H1 (cell line): ENCODE measurements at regions of chr1 and their contacts with region 1.

Region 1: GRCh38 chr1:70410604-70411359 is at the start of gene CTH:
- DNase-seq: peak; percentile 95 to 96
- H3K4me3 ChIP-seq: peak within 1 kb of the TSS; percentile 79 to 96 (median 88)
- H3K27ac ChIP-seq: peak within 1 kb of the TSS; percentile 98
- H3K4me1 ChIP-seq: no peaks in the 10 kb centered on the region; a peak in 1 of 7 replicates
- H3K27me3 ChIP-seq: no peaks in the 10 kb centered on the region
- CTCF ChIP-seq: no peak
- EP300 ChIP-seq: peak; percentile 28 to 79; a peak in 2 of 3 replicates
- POLR2A ChIP-seq: peak; percentile 99 to 100
- RAD21 ChIP-seq: no peak
- total RNA-seq, gene CTH: 33.2 and 34.5 TPM in 2 replicates

Region 2: GRCh38 chr1:70221241-70222121 is 189.3 kb before region 1 on chr1 and contains the start of gene SRSF11:
- CTCF ChIA-PET with region 1: no interaction called
- POLR2A ChIA-PET with region 1: interaction called, 23 read pairs
- DNase-seq: peak; percentile 73 to 98
- H3K4me3 ChIP-seq: peak within 1 kb of the TSS; percentile 92 to 95 (median 94)
- H3K27ac ChIP-seq: peak within 1 kb of the TSS; percentile 94
- H3K4me1 ChIP-seq: no peaks in the 10 kb centered on the region
- H3K27me3 ChIP-seq: no peaks in the 10 kb centered on the region
- CTCF ChIP-seq: no peak
- EP300 ChIP-seq: no peak; a peak in 1 of 3 replicates
- POLR2A ChIP-seq: peak; percentile 75 to 99
- RAD21 ChIP-seq: no peak
- total RNA-seq, gene SRSF11: 169 and 183 TPM in 2 replicates

Region 3: GRCh38 chr1:70256664-70257063 is 154.1 kb before region 1 on chr1:
- CTCF ChIA-PET with region 1: no interaction called
- POLR2A ChIA-PET with region 1: interaction called, 11 read pairs
- DNase-seq: no peak
- H3K4me3 ChIP-seq: no peak overlapping the region
- H3K27ac ChIP-seq: no peak overlapping the region
- H3K4me1 ChIP-seq: no peaks in the 10 kb centered on the region
- H3K27me3 ChIP-seq: no peaks in the 10 kb centered on the region
- CTCF ChIP-seq: no peak
- EP300 ChIP-seq: no peak
- POLR2A ChIP-seq: no peak
- RAD21 ChIP-seq: no peak

Region 4: GRCh38 chr1:70314706-70315304 is 96.0 kb before region 1 on chr1:
- CTCF ChIA-PET with region 1: no interaction called
- POLR2A ChIA-PET with region 1: interaction called, 17 read pairs
- DNase-seq: no peak
- H3K4me3 ChIP-seq: no peak overlapping the region
- H3K27ac ChIP-seq: no peak overlapping the region
- H3K4me1 ChIP-seq: no peaks in the 10 kb centered on the region
- H3K27me3 ChIP-seq: no peaks in the 10 kb centered on the region
- CTCF ChIP-seq: peak in 1 of 3 experiments; percentile 7; a peak in 1 of 4 replicates
- EP300 ChIP-seq: no peak
- POLR2A ChIP-seq: no peak
- RAD21 ChIP-seq: no peak; a peak in 1 of 4 replicates

Region 5: DNA sequence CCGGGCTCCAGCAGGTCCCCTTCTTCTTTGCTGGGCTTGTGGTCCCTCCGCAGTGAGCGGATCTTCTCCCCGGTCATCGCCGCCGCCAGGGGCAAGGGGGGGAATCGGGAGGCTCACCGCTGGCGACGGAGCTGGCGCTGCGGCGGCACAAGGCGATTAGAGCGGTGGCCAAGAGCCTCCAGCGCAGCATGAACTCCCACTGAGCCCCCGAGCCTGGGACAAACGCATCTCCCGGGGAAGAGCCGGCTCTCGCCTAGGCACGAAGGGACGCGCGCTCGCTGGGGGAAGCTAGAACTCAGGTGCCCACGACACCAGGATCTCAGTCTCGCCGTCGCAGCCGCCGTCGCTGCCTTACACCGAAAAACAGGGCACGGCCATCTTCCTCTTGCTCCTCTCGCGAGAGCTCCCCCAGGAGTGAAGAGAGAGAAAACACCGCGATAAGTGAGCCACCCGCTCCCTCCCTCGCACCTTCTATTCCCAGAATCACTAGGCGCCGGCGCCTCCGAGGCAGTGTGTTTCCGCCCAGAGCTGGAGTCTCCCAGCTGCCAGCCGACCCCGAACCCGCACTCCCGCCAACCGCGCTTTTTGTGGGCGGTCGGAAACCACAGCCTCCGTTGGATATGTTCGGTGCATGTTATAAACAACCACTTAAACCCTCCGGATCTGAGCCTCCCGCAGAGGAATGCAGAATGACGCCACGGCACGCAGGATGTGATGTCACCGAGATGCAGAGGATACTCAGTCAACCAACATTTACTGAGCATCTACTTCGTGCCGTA is 56.3 kb before region 1 on chr1 and contains the start of gene ANKRD13C:
- CTCF ChIA-PET with region 1: interaction called, 8 read pairs
- POLR2A ChIA-PET with region 1: interaction called, 103 read pairs
- DNase-seq: peak; percentile 83 to 93
- H3K4me3 ChIP-seq: peak within 1 kb of the TSS; percentile 86 to 97 (median 90)
- H3K27ac ChIP-seq: peak within 1 kb of the TSS; percentile 98
- H3K4me1 ChIP-seq: no peaks in the 10 kb centered on the region
- H3K27me3 ChIP-seq: no peaks in the 10 kb centered on the region
- CTCF ChIP-seq: 0 out of 4 replicates have a peak, but pooled peaks of 1 of the 3 experiments have one; percentile 2
- EP300 ChIP-seq: no peak
- POLR2A ChIP-seq: peak; percentile 94 to 98
- RAD21 ChIP-seq: peak; percentile 8 to 17; a peak in 2 of 4 replicates
- total RNA-seq, gene ANKRD13C: 20.9 and 21.7 TPM in 2 replicates

Region 6: GRCh38 chr1:70382682-70383081 is 28.1 kb before region 1 on chr1:
- CTCF ChIA-PET with region 1: interaction called, 3 read pairs
- POLR2A ChIA-PET with region 1: interaction called, 58 read pairs
- DNase-seq: no peak
- H3K4me3 ChIP-seq: no peak overlapping the region
- H3K27ac ChIP-seq: no peak overlapping the region
- H3K4me1 ChIP-seq: no peaks in the 10 kb centered on the region
- H3K27me3 ChIP-seq: no peaks in the 10 kb centered on the region
- CTCF ChIP-seq: no peak
- EP300 ChIP-seq: no peak
- POLR2A ChIP-seq: no peak
- RAD21 ChIP-seq: no peak

Region 7: GRCh38 chr1:70427976-70428375 is 17.2 kb after region 1 on chr1:
- CTCF ChIA-PET with region 1: interaction called, 3 read pairs
- POLR2A ChIA-PET with region 1: interaction called, 17 read pairs
- DNase-seq: no peak
- H3K4me3 ChIP-seq: no peak overlapping the region
- H3K27ac ChIP-seq: no peak overlapping the region
- H3K4me1 ChIP-seq: peaks cover 0 to 6% (median 0%) of the 10 kb centered on the region in 4 experiments; a peak in 1 of 7 replicates
- H3K27me3 ChIP-seq: no peaks in the 10 kb centered on the region
- CTCF ChIP-seq: no peak
- EP300 ChIP-seq: no peak
- POLR2A ChIP-seq: no peak
- RAD21 ChIP-seq: no peak